Ascending aorta (tissue), 2 donors: ENCODE measurements at regions of chr1 and their contacts with region 1.

Region 1: DNA sequence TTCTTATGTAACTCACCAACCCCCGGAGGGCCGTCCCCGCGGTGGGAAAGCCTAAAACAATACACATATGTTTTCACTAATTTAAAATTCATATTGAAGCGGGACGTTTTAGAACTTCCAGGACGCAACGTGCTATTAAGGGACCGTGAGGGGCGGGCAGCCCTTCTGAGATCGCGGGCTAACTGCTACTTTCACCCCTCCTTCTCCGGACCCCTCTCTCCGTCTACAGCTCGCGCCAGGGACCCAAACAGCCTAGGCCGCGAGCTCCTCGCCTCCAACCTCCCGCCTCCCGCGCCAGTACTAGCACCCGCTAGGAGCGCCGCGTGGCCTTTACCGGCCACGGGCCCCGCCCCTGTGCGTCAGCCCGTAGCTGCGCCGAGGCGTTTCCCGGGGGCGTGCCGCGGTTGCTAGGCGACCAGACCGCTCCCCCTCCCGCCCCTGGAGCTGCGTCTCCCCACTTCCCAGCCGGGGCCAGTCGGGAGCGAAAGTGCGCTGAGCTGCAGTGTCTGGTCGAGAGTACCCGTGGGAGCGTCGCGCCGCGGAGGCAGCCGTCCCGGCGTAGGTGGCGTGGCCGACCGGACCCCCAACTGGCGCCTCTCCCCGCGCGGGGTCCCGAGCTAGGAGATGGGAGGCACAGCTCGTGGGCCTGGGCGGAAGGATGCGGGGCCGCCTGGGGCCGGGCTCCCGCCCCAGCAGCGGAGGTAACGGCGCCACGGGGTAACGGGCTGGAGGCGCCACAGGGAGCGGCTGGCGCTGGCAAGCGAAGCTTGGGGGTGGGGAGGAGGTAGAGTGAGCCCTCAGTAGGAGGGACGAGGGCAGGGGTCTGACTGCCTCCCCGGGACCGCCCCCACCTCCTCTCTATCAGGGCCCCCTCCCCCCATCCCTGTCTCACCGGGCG is at the start of gene DYRK3:
- DNase-seq: peak; percentile 71 to 96
- H3K4me3 ChIP-seq: peak within 1 kb of the TSS; percentile 80 to 83
- H3K27ac ChIP-seq: peak within 1 kb of the TSS; percentile 77 to 79
- H3K4me1 ChIP-seq: peaks cover 0 to 22% of the 10 kb centered on the region in 2 donors
- H3K27me3 ChIP-seq: no peaks in the 10 kb centered on the region
- CTCF ChIP-seq: no peak
- total RNA-seq, gene DYRK3: 17.9 TPM

Region 2: GRCh38 chr1:205504311-205504984 is 1130.9 kb before region 1 on chr1 and contains the start of gene CDK18:
- intact Hi-C with region 1: no loop called
- DNase-seq: peak in 1 of 2 donors; percentile 90
- H3K4me3 ChIP-seq: peak within 1 kb of the TSS; percentile 86 to 92
- H3K27ac ChIP-seq: peak within 1 kb of the TSS; percentile 59 to 69
- H3K4me1 ChIP-seq: peaks cover 0 to 17% of the 10 kb centered on the region in 2 donors
- H3K27me3 ChIP-seq: no peaks in the 10 kb centered on the region
- CTCF ChIP-seq: no peak
- total RNA-seq, gene CDK18: 70.0 TPM

Region 3: DNA sequence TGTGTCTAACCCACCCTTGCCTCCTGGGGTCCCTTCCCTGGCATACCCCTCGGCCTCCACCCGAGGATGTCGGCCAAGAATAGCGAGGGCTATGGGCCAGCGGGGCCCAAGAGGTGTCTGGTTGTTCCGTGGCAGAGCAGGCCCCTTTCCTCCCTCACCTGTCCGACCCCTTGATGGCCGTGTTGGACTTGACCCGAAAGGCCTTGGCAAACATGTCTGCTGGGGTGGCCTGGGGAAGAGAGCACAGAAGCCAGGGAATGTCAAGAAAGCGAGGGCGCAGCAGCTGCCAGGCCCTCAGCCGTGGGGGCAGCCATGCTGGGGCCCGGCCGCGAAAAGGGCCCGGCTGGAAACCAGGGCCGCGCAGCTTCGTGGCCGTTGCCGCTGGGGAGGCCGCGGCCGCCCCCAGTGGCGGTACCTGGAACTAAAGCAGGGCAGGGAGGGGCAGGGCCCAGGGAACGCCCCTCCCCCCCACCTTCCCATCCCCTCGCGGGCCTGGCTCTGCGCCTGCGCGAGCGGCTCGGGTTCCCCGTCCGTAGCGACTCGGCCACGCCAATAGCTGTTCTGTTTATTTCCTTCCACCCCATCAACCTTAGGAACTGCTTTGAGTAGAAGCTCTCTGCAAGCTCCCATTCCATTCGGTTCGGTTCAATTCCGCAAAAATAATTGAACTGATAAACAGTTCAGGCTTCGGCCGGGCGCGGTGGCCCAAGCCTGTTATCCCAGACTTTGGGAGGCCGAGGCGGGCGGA is 23.0 kb before region 1 on chr1 and contains the start of gene EIF2D:
- intact Hi-C with region 1: loop called (anchors 1 kb)
- DNase-seq: peak; percentile 67 to 96
- H3K4me3 ChIP-seq: peak within 1 kb of the TSS; percentile 64 to 84
- H3K27ac ChIP-seq: peak within 1 kb of the TSS; percentile 84 to 85
- H3K4me1 ChIP-seq: peaks cover 3 to 11% of the 10 kb centered on the region in 2 donors
- H3K27me3 ChIP-seq: no peaks in the 10 kb centered on the region
- CTCF ChIP-seq: peak; percentile 98 to 99 (median 99)
- total RNA-seq, gene EIF2D: 40.2 TPM

Region 4: GRCh38 chr1:206663832-206664652 is 28.7 kb after region 1 on chr1:
- intact Hi-C with region 1: loop called (anchors 1 kb)
- DNase-seq: no peak
- H3K4me3 ChIP-seq: peak overlapping the region in 1 of 2 donors; percentile 29
- H3K27ac ChIP-seq: no peak overlapping the region
- H3K4me1 ChIP-seq: peaks cover 0 to 7% of the 10 kb centered on the region in 2 donors
- H3K27me3 ChIP-seq: no peaks in the 10 kb centered on the region
- CTCF ChIP-seq: peak; percentile 78 to 87 (median 80)

Region 5: DNA sequence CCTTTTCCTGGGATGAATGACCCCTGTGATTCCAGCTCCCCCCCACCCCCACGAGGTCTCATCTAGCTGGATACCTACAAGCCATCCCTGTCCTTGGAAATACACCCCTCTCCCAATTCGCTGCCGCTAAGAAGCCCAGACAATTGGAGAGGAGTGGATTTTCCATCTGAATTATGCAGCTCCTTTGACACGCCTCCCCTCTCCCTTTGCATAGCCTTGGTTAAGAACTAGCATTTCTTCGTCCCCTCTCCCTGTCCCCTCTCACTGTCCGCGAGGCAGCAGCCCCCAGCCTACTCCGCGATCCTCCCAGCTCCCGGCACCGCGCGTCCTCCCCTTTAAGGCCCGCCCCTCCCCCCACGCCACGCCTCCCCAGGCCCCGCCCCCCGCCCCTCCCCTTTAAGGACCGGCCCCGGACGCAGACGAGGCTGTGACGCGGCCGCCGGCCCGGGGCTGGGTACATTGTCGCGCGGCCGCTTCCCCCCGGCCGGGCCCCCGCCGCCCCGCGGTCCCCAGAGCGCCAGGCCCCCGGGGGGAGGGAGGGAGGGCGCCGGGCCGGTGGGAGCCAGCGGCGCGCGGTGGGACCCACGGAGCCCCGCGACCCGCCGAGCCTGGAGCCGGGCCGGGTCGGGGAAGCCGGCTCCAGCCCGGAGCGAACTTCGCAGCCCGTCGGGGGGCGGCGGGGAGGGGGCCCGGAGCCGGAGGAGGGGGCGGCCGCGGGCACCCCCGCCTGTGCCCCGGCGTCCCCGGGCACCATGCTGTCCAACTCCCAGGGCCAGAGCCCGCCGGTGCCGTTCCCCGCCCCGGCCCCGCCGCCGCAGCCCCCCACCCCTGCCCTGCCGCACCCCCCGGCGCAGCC is 49.4 kb after region 1 on chr1 and contains the start of gene MAPKAPK2:
- intact Hi-C with region 1: loop called (anchors 2 kb)
- DNase-seq: peak in 1 of 2 donors; percentile 88
- H3K4me3 ChIP-seq: peak within 1 kb of the TSS; percentile 72 to 89
- H3K27ac ChIP-seq: peak within 1 kb of the TSS; percentile 95 to 98
- H3K4me1 ChIP-seq: peaks cover 9 to 28% of the 10 kb centered on the region in 2 donors
- H3K27me3 ChIP-seq: no peaks in the 10 kb centered on the region
- CTCF ChIP-seq: no peak
- total RNA-seq, gene MAPKAPK2: 35.3 TPM

Region 6: DNA sequence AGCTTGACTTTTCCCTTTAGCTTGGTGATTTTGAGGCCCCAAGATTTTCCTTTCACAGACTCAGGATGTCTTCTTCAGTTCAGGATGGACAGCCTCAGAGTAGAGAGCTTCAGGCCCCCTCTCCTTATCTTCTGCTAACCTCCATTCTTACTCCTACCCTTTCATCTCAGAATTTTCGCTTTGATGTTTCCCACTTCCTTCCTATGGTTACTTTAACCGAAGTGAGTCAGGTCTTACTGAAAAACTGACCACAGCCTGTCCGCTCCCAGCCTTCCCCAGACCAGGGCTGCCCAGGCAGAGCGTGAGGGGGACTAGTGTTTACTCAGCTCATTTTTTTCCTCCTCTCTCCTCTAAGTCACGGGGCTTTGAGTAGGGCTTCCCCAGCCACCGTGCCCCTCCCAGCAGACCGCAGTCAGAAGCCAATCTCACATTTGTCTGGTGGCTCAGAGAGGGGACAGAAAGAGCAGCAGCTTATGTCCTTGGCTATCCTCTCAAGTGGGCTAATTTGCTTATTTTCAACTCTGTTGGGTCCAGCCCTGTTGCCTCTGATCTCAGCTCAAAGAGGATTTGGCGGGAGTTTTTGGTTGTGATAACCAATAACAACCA is 131.0 kb after region 1 on chr1:
- intact Hi-C with region 1: no loop called
- DNase-seq: peak in 1 of 2 donors; percentile 52
- H3K4me3 ChIP-seq: no peak overlapping the region
- H3K27ac ChIP-seq: no peak overlapping the region
- H3K4me1 ChIP-seq: no peaks in the 10 kb centered on the region
- H3K27me3 ChIP-seq: no peaks in the 10 kb centered on the region
- CTCF ChIP-seq: no peak

Region 7: GRCh38 chr1:206808615-206809014 is 173.3 kb after region 1 on chr1:
- intact Hi-C with region 1: loop called (anchors 10 kb)
- DNase-seq: no peak
- H3K4me3 ChIP-seq: no peak overlapping the region
- H3K27ac ChIP-seq: no peak overlapping the region
- H3K4me1 ChIP-seq: no peaks in the 10 kb centered on the region
- H3K27me3 ChIP-seq: no peaks in the 10 kb centered on the region
- CTCF ChIP-seq: peak; percentile 13 to 46 (median 43)

Region 8: GRCh38 chr1:206912445-206913095 is 277.2 kb after region 1 on chr1:
- intact Hi-C with region 1: loop called (anchors 1 kb)
- DNase-seq: peak in 1 of 2 donors; percentile 79
- H3K4me3 ChIP-seq: no peak overlapping the region
- H3K27ac ChIP-seq: no peak overlapping the region
- H3K4me1 ChIP-seq: peaks cover 0 to 10% of the 10 kb centered on the region in 2 donors
- H3K27me3 ChIP-seq: peaks cover 10% of the 10 kb centered on the region
- CTCF ChIP-seq: peak; percentile 72 to 82 (median 78)